Mammary epithelial cell (primary cell): ENCODE measurements at regions of chr6 and their contacts with region 1.

Region 1: DNA sequence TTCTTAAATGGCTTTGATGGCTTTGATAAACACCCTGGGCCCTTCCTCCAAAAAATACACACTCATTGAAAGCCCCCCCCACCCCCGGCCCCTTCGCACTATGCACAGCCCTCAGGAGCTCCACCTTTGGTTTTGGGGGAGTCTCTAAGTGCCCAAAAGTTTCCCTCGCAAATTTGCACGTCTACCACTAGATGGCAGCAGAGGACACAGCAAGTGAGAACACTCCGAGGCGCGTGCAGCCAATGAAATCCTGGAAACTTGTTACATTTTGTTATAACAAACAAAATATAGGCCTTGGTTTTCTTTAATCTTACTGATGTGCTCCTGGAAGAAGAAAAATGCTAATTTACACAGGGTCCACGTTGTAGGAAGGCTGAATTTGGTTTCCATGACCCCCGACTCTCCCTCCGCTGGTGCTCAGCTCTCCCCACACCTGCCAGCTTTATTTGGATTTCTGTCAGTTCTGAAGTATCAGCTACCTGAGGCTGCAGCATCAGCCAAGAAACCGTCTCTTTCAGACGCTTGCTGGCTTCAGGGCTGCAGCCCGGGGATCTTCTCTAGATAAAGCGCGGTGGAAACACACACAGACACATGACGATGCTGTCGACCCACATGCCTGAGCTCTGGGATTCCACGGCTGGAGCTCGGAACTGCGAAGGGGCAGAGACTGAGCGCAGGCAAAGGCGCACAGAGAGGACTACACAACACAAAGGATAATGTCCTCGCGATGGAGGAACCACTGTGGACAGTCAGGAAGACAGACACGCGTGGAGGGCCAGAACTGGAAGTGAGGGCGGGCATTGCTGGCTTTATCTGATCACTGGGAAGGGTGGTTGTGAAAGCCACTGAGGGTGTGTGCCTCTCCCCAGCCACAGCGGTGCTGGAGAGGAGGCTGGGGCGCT is 148.4 kb upstream of the RPS6KA2 start:
- DNase-seq: peak; percentile 44
- H3K4me3 ChIP-seq: no peak overlapping the region
- H3K27ac ChIP-seq: no peak overlapping the region
- H3K4me1 ChIP-seq: no peaks in the 10 kb centered on the region
- H3K27me3 ChIP-seq: peaks cover 4% of the 10 kb centered on the region
- CTCF ChIP-seq: peak; percentile 85 to 89

Region 2: GRCh38 chr6:166815629-166816028 is 40.2 kb after region 1 on chr6:
- CTCF ChIA-PET with region 1: no interaction called
- dilution Hi-C with region 1: no loop called
- in situ Hi-C with region 1: no loop called
- intact Hi-C with region 1: no loop called
- DNase-seq: peak; percentile 1
- H3K4me3 ChIP-seq: no peak overlapping the region
- H3K27ac ChIP-seq: no peak overlapping the region
- H3K4me1 ChIP-seq: no peaks in the 10 kb centered on the region
- H3K27me3 ChIP-seq: no peaks in the 10 kb centered on the region
- CTCF ChIP-seq: no peak

Region 3: GRCh38 chr6:166830185-166830890 is 54.9 kb after region 1 on chr6:
- CTCF ChIA-PET with region 1: no interaction called
- dilution Hi-C with region 1: no loop called
- in situ Hi-C with region 1: no loop called
- intact Hi-C with region 1: no loop called
- DNase-seq: no peak
- H3K4me3 ChIP-seq: no peak overlapping the region
- H3K27ac ChIP-seq: no peak overlapping the region
- H3K4me1 ChIP-seq: no peaks in the 10 kb centered on the region
- H3K27me3 ChIP-seq: no peaks in the 10 kb centered on the region
- CTCF ChIP-seq: no peak

Region 4: DNA sequence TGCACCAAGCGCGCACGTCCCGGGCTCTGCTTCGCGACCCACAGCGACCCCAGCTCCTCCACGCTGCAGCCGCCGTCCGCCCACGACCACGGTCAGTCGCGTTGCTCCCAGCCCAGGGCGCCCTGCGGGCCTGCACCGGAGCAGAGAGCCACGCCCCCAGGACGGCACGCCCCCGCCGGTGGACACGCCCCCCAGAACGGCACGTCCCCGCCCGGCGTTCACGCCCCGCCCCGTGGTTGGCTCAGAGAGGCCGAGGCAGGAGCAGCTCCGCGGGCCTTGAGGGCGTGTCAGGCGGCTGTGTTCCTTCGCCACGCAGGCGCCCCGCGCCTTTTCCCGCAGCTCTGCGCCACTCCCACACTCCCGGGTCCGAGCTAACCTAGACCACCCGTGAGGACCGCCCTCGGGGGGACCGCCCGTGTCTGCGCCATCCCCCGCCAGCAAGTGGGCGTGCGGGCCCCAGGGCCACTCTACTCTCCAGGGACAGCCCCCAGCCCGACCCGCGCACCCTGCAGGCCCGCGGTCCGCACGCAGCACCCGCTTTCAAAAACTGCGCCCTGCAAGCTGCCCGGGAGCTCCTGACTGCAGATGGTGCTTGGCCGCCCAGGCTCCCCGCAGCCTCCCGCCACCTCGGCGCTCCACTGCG is 181.1 kb after region 1 on chr6 and contains the start of gene RNASET2:
- CTCF ChIA-PET with region 1: no interaction called
- dilution Hi-C with region 1: no loop called
- in situ Hi-C with region 1: loop called in 1 of 2 experiments (anchors 25 kb)
- intact Hi-C with region 1: no loop called
- DNase-seq: peak; percentile 85
- H3K4me3 ChIP-seq: peak within 1 kb of the TSS; percentile 75 to 90 (median 81)
- H3K27ac ChIP-seq: no peak within 1 kb of the TSS
- H3K4me1 ChIP-seq: peaks cover 16% of the 10 kb centered on the region
- H3K27me3 ChIP-seq: no peaks in the 10 kb centered on the region
- CTCF ChIP-seq: no peak
- total RNA-seq, gene RNASET2: 17.0 to 18.7 TPM

Region 5: GRCh38 chr6:166989427-166990032 is 214.1 kb after region 1 on chr6:
- CTCF ChIA-PET with region 1: interaction called, 11 read pairs
- dilution Hi-C with region 1: no loop called
- in situ Hi-C with region 1: loop called in 1 of 2 experiments (anchors 25 kb)
- intact Hi-C with region 1: loop called (anchors 1 kb)
- DNase-seq: peak; percentile 11
- H3K4me3 ChIP-seq: no peak overlapping the region
- H3K27ac ChIP-seq: no peak overlapping the region
- H3K4me1 ChIP-seq: peaks cover 5% of the 10 kb centered on the region
- H3K27me3 ChIP-seq: no peaks in the 10 kb centered on the region
- CTCF ChIP-seq: peak; percentile 31 to 55

Region 6: DNA sequence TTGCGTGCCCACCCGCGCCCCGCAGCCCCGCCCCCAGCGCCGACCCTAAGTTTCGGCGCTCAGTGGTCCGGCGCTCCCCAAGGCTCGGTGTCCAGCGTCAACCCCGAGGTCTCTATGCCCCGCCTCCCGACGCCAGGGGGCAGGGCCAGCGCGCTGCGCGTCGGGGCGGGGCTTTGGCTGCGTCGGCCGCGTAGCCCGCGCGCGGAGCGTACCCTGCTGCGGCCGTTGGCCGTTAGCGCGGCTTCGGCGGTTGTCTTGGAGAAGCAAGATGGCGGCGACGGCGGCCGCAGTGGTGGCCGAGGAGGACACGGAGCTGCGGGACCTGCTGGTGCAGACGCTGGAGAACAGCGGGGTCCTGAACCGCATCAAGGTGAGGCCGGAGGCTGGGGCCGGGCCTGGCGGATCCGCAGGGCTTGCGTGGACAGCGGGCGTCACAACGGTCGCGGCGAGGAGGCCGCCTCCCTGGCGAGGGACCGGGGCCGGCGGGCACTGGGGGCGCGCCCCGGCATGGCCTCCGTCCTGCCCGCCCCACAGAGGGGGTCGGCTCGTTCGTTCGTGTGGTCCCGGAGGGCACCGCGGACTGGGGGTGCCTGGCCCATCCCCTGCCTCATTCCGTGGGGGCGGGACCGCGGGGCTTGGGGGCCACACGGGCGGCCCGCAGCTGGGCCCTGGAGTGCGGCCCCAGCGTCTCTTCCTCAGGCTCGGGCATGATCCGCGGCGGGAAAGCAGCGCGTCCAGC is 223.9 kb after region 1 on chr6 and contains the start of gene CEP43:
- CTCF ChIA-PET with region 1: interaction called, 3 read pairs
- dilution Hi-C with region 1: no loop called
- in situ Hi-C with region 1: loop called in 1 of 2 experiments (anchors 25 kb)
- intact Hi-C with region 1: no loop called
- DNase-seq: peak; percentile 94
- H3K4me3 ChIP-seq: peak within 1 kb of the TSS; percentile 88 to 98 (median 91)
- H3K27ac ChIP-seq: peak within 1 kb of the TSS; percentile 76
- H3K4me1 ChIP-seq: peaks cover 14% of the 10 kb centered on the region
- H3K27me3 ChIP-seq: no peaks in the 10 kb centered on the region
- CTCF ChIP-seq: no peak
- total RNA-seq, gene CEP43: 16.3 to 17.3 TPM

Region 7: GRCh38 chr6:167141667-167142432 is 366.4 kb after region 1 on chr6:
- CTCF ChIA-PET with region 1: no interaction called
- dilution Hi-C with region 1: no loop called
- in situ Hi-C with region 1: loop called in 1 of 2 experiments (anchors 25 kb)
- intact Hi-C with region 1: loop called (anchors 1 kb)
- DNase-seq: peak; percentile 20
- H3K4me3 ChIP-seq: no peak overlapping the region
- H3K27ac ChIP-seq: no peak overlapping the region
- H3K4me1 ChIP-seq: no peaks in the 10 kb centered on the region
- H3K27me3 ChIP-seq: no peaks in the 10 kb centered on the region
- CTCF ChIP-seq: peak; percentile 46 to 79

Region 8: DNA sequence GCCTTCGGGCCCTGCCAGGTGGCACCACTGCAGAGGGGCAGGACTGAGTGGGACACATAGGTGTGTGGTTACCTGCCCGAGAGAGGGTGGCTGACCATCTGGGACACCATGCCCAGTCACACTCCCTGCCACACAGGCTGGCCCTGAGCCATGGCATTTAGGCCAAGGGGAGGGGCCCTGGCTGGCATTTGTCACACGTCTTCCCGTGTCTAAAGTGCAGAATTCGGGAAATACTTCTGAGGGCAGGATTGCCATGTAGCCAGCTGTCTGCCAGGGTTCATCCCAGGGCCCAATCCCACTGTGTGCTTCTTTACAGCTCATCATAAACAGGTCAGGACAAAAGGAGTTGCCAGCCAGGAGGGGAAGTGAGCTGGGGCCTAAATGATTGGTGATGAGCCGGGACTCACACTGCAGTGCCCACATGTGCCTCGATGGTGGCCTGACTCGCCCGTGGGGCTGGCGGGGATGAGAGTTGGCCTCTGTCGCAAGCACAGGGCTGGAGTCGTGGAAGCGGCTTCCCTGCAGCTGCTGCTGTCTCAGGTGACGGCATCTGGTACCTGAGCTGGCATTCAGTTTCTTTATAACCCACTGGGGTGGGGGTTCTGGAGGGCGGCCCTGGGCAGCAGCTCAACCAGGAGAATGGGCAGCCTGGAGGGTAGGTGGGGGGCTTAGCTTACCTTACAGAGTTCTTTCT is 509.8 kb after region 1 on chr6:
- CTCF ChIA-PET with region 1: no interaction called
- dilution Hi-C with region 1: no loop called
- in situ Hi-C with region 1: no loop called
- intact Hi-C with region 1: loop called (anchors 5 kb)
- DNase-seq: no peak
- H3K4me3 ChIP-seq: no peak overlapping the region
- H3K27ac ChIP-seq: no peak overlapping the region
- H3K4me1 ChIP-seq: no peaks in the 10 kb centered on the region
- H3K27me3 ChIP-seq: no peaks in the 10 kb centered on the region
- CTCF ChIP-seq: no peak